Left cardiac atrium (tissue), 4 donors: ENCODE measurements at regions of chr2 and their contacts with region 1.

Region 1: DNA sequence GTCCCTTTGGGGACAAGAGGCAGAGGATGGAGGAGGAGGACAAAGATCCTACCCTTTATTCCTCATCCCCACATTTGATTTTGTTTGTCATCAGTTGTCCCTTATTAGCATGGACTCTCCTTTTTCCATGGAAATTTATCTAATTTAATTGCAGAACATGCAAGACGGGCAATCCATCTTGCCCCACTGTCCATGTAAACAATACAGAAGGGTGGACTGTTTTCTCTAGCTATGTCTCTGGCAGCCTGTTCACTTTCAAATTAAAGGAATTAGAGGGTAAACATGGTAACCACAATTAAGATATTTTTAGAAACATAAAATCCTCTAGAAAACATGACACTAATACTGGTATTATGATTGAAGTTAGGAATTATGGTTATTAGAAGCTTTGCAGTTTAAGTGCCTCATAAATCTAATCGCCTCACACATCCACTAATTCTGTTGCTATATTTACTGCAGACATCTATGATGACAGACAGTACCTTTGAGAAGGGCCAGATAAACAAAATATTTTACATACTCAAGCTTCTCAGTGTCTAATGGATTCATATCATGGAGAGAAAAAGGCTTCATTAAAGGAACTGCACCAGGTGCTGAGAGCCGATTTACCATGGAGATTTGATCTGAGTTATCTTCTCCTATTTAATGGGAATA is 215.5 kb downstream of the LNPK start:
- DNase-seq: no peak
- ATAC-seq: no peak

Region 2: DNA sequence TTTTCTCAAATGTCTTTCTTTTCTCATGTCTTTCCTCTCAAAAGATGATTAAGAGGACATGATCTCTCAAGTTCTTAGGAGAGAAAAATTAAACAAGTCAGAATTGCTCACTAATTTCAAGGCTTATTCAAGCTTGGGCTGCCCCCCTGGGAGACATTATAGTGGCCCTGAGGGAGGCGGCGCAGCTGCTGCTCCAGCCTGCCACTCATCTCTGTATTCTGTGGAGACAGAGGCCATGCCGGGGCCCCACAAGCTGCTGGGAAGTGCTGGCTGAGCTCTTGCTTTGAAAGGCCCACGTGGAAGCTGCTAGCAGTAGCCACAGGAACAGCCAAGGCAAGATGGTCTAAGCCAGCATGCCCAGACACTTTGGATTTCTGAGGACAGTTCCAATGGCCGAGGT is 51.9 kb before region 1 on chr2:
- intact Hi-C with region 1: loop called in 1 of 2 experiments (anchors 5 kb)
- DNase-seq: no peak
- ATAC-seq: no peak